ENCODE measurements at regions of chr21 and their contacts with region 1.

Region 1: GRCh38 chr21:18951271-18952065 is 547.9 kb upstream of the TMPRSS15 start:
- DNase-seq: peak; percentile 42
- H3K4me3 ChIP-seq: no peak overlapping the region
- H3K27ac ChIP-seq: no peak overlapping the region
- H3K4me1 ChIP-seq: no peaks in the 10 kb centered on the region
- H3K27me3 ChIP-seq: no peaks in the 10 kb centered on the region
- CTCF ChIP-seq: peak; percentile 38

Region 2: DNA sequence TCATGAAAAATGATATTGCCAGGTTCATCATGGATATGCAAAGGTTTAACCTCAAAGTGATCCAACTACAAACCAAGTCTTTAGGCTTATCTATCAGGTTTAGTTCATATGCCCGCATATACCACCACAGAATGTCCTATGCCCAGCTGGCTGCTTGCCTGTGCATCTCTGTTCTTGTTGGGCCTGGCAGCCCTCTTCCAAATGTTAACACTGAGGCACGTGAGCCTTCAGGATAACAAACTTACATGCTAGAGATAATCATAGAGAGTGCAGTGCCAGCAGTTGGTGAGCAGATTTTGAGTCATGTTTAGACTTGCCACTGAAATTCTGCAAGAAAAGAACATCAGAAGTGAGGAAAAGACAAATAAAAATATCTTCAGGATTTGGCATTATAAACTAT is 60.0 kb after region 1 on chr21:
- intact Hi-C with region 1: no loop called
- DNase-seq: no peak
- H3K4me3 ChIP-seq: no peak overlapping the region
- H3K27ac ChIP-seq: no peak overlapping the region
- H3K4me1 ChIP-seq: no peaks in the 10 kb centered on the region
- H3K27me3 ChIP-seq: no peaks in the 10 kb centered on the region
- CTCF ChIP-seq: no peak

Region 3: DNA sequence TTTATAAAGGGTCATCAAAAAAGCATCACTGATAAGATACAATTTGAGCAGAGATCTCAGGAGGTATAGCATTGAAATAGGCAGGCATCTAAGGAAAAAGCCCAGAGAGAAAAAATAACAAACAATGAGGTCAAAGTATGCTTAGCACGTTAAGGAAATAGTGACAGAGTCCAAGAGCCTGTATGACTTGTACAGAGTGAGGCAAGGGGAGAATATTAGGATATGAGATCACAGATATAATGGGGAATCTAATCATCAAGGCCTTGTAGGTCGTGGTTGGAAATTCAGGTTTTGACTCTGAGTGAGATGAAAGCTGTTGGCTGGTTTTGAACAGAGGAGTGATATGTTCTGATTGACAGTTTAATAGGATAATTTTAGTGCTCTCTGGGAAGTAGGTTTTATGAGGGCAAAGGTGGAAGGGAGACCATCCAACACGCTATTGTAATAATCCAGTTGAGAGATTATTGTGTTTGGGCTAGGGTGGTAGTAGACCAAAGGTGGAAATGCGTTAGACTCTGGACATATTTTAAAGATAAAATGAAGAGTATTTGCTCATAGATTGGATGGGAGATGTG is 96.7 kb after region 1 on chr21:
- intact Hi-C with region 1: no loop called
- DNase-seq: peak; percentile 49
- H3K4me3 ChIP-seq: no peak overlapping the region
- H3K27ac ChIP-seq: peak overlapping the region; percentile 25
- H3K4me1 ChIP-seq: no peaks in the 10 kb centered on the region
- H3K27me3 ChIP-seq: no peaks in the 10 kb centered on the region
- CTCF ChIP-seq: no peak

Region 4: DNA sequence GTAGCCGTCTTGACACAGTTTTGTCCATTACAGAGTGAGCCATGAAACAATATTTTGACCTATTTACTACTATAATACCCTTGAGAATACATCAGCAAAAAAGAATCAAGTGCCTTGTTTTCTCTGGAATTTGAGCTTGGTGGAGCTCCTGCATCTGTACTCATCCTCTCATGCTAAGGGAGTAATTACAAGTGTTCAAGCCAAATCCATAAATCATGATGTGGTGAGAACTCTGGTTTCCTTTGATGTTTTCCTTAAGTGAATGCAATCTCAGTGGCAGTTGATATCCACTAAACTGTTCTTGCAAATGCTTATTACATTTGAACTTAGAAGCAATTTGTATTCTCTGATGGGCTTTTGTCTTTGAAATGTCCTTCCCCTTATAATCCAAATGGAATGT is 276.8 kb after region 1 on chr21:
- intact Hi-C with region 1: no loop called
- DNase-seq: no peak
- H3K4me3 ChIP-seq: no peak overlapping the region
- H3K27ac ChIP-seq: no peak overlapping the region
- H3K4me1 ChIP-seq: no peaks in the 10 kb centered on the region
- H3K27me3 ChIP-seq: no peaks in the 10 kb centered on the region
- CTCF ChIP-seq: no peak

Region 5: GRCh38 chr21:20040768-20041167 is 1089.3 kb after region 1 on chr21:
- intact Hi-C with region 1: loop called (anchors 10 kb)
- DNase-seq: no peak
- H3K4me3 ChIP-seq: no peak overlapping the region
- H3K27ac ChIP-seq: no peak overlapping the region
- H3K4me1 ChIP-seq: no peaks in the 10 kb centered on the region
- H3K27me3 ChIP-seq: no peaks in the 10 kb centered on the region
- CTCF ChIP-seq: peak; percentile 37

Measured in colonic mucosa (tissue), 4 donors.